ENCODE measurements at regions of chr18 and their contacts with region 1.

Region 1: GRCh38 chr18:21980744-21981143 is 188.6 kb upstream of the GATA6 start:
- DNase-seq: no peak
- ATAC-seq: no peak
- H3K4me3 ChIP-seq: no peak overlapping the region
- H3K27ac ChIP-seq: no peak overlapping the region
- H3K4me1 ChIP-seq: no peaks in the 10 kb centered on the region
- H3K27me3 ChIP-seq: no peaks in the 10 kb centered on the region
- CTCF ChIP-seq: no peak

Region 2: GRCh38 chr18:22613058-22613691 is 632.4 kb after region 1 on chr18:
- CTCF ChIA-PET with region 1: no interaction called
- POLR2A ChIA-PET with region 1: interaction called, 10 read pairs
- in situ Hi-C with region 1: no loop called
- intact Hi-C with region 1: no loop called
- DNase-seq: no peak
- ATAC-seq: no peak
- H3K4me3 ChIP-seq: no peak overlapping the region
- H3K27ac ChIP-seq: no peak overlapping the region
- H3K4me1 ChIP-seq: no peaks in the 10 kb centered on the region
- H3K27me3 ChIP-seq: no peaks in the 10 kb centered on the region; the same call in none of the 2 replicates
- CTCF ChIP-seq: no peak